ENCODE measurements at regions of chr7 and their contacts with region 1.

Region 1: DNA sequence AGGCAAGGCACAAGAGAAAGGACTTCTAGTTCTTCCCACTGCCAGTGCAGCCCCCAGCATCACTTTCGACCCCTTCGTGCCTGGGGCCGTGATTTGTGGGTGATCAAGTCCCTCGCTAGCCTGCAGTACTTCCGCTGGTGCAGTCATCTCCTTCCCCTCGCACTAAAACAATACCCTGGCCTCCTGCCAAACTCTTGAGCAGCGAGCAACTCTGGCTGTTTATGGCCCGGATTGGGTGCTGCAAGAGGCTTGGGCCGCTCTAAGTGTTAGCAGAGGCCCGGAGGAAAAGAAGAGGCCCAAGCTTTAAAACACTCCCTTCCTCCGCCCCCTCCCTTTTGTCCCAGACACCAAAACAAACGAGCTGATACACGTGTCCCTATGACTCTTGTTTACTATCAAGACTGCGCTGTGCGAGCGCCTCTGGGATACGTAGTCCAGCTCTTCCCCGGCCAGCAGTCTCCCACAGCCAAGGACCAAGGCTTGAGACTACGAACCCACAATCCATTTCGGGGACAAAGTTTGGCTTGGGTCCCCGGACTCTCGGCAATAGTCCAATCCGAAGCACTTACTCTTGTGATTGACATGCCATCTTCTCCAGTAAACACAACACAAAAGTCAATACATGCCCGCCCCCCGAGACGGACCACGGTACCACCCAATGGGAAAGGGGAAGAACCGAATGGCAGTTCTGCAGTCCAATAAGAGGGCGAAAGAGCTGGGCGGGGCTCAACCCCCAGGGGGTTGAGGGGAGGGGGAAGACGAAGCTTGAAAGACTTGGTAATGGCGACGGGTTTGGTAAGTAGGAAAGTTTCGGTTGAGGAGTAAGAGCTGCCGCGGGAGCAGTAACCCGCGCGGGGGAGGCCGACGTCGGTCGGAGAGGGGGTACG is at the start of gene HBP1:
- DNase-seq: peak; percentile 98
- ATAC-seq: peak; percentile 95
- total RNA-seq, gene HBP1: 65.8 TPM

Region 2: DNA sequence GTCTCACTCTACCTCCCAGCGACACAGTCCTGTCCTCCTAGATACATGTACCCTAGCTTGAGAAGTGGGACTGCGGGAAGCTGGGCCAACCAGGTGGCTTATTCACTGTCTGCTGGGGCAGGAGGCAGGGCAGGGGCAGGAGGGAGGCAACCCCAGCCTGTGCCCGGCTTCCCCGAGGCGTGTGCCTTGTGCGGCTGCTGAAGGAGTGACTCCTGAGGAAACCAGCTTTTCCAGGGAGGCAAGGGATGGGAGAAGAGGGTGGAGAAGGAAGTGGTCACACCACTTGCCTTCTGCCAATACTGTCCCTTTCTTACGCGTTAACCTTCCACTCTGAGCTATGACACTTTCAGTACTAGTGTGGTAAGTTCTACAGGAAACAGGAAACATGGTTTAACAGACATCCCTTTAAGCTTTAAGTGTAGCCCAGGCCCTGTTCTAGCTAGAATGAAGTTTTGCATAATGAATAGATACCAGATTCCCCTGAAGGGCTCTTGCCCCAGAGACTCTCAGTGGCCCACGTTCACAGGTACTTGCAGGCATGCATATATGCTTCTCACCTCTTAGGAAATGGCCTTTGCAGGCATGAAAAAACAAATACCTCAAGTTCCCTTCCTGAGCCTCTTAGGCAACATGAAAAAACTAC is 1097.0 kb before region 1 on chr7:
- intact Hi-C with region 1: loop called (anchors 5 kb)
- DNase-seq: no peak
- ATAC-seq: peak; percentile 24

Region 3: DNA sequence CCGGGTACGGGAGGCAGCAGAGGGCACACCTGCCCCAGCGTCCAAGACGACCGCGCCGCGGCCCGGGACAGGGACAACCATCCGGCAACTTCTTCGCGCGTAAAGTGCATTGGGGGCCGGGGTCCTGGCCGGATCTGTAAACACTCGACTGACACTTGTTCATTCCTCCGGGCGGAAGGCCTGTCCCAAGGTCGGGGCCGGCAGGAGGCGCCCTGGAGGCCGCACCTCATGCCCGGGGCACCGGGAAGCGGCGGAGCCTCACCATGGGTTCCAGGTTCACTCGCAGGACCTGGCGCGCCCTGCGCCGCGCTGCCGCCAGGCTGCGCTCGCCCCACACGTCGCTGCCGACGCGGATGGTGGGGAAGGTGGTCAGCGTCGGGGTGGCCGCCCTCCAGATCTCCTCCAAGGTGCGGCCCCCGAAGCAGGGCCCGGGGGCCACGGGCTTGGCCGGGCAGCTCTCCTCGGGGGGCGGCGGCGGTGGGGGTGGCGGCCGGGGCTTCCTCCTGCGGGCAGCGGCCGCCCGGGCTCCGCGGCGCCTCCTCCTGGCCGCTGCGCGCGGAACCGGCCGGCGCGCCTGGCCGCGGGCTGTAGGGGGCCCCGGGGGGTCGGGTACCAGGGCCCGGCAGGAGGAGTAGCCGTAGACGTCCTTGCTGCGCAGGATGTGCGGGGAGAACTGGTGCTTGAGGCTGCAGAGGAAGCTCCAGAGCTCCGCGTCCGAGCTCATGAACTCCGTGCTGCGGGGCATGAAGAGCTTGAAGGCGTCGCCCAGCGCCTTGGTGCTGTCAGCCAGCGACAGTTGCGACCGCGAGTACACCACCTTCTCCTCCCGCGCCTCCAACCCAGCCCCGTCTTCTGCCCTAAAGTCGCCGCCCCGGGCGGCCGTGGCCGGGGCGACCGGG is 508.3 kb before region 1 on chr7:
- intact Hi-C with region 1: loop called (anchors 5 kb)
- DNase-seq: peak; percentile 91
- ATAC-seq: peak; percentile 56

Region 4: GRCh38 chr7:107355616-107356015 is 187.1 kb after region 1 on chr7:
- intact Hi-C with region 1: no loop called
- DNase-seq: no peak
- ATAC-seq: no peak

Region 5: DNA sequence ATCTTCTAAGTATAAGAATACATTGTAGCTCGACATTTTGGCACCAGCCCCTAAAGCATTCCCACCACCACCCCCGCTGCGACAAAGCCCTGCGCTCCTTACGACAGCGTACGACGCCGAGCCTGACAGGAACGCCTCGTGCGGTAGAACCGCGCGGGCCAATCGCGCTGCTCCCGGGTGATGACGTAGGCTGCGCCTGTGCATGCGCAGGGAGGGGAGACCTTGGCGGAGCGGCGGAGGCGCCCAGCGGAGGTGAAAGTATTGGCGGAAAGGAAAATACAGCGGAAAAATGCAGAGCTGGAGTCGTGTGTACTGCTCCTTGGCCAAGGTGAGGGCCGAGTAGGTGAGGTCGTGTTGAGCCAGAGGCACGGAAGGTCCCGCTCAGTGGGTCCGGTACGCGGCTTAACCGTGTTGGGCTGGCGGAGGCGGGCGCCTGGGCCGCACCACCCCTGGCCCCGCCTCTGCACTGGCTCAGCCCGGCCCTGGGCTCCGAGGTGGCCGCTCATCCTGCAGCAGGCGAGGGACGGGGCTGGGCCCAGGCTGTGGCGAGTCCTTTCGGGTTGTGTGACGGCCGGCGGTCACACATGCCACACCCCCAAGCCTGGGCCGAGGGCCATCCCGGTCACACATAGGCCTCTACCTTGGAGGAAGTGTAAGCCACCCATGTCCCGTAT is 722.6 kb after region 1 on chr7 and contains the start of gene DLD:
- intact Hi-C with region 1: loop called (anchors 1 kb)
- DNase-seq: peak; percentile 99
- ATAC-seq: peak; percentile 99
- total RNA-seq, gene DLD: 288 TPM